Spleen (tissue), 13 donors: ENCODE measurements at regions of chr6 and their contacts with region 1.

Region 1: GRCh38 chr6:107964671-107965340 is 6.8 kb upstream of the SEC63 start:
- DNase-seq: no peak
- H3K4me3 ChIP-seq: no peak overlapping the region
- H3K27ac ChIP-seq: no peak overlapping the region
- H3K4me1 ChIP-seq: no peaks in the 10 kb centered on the region
- H3K27me3 ChIP-seq: no peaks in the 10 kb centered on the region
- CTCF ChIP-seq: no peak
- POLR2A ChIP-seq: no peak

Region 2: DNA sequence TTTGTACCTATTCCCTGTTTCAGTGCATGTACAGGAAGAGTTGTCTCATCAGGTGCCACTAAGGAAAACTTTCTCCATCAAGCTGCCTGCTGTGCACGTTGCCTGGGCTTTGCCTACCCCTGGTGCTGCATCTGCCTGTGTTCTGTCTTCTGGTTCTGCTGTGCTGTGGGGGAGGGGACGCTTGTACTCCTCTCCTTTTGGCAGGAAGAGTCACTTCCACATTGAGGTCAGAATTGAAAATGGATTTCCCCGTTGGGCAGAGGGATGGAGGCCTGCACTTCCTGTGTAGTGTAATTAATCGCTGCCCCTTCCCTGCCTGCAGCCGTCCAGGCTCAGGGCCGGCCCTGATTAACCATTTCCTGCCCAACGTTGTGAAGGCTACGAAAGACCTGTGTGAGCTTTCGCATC is 294.0 kb before region 1 on chr6:
- intact Hi-C with region 1: no loop called
- DNase-seq: peak; percentile 82
- H3K4me3 ChIP-seq: peak overlapping the region in 1 of 8 donors; percentile 7
- H3K27ac ChIP-seq: peak overlapping the region in 5 of 8 donors; percentile 17 to 63 (median 57)
- H3K4me1 ChIP-seq: peaks cover 22 to 75% (median 39%) of the 10 kb centered on the region in 6 donors
- H3K27me3 ChIP-seq: no peaks in the 10 kb centered on the region
- CTCF ChIP-seq: no peak
- POLR2A ChIP-seq: no peak

Region 3: GRCh38 chr6:108039681-108040080 is 74.9 kb after region 1 on chr6:
- intact Hi-C with region 1: loop called (anchors 10 kb)
- DNase-seq: no peak
- H3K4me3 ChIP-seq: no peak overlapping the region
- H3K27ac ChIP-seq: no peak overlapping the region
- H3K4me1 ChIP-seq: no peaks in the 10 kb centered on the region
- H3K27me3 ChIP-seq: no peaks in the 10 kb centered on the region
- CTCF ChIP-seq: no peak
- POLR2A ChIP-seq: no peak